ENCODE measurements at regions of chr6 and their contacts with region 1.

Region 1: DNA sequence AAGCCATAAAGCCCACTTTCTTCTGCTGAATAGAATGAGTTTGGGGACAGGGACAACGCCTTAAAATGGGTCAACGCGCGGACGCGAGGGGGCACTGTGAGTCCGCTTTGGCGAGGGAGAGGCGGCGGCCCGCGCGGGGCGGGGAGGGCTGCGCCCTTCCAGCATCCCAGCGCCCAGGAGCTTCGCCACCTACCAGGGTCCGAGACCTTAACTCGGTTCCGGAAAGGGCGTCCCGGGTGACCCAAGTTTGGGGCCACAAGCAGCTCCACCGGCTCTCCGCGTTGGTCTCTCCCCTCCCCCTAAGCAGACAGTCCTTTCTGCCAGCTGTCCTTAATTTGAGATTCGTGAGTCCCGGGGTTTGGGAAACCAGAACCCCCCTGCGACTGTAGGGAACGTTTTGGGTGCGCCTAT is 1.8 kb upstream of the SAMD5 start:
- DNase-seq: peak; percentile 70 to 84
- ATAC-seq: peak; percentile 66 to 87 (median 78)
- H3K4me3 ChIP-seq: peak overlapping the region; percentile 74
- H3K27ac ChIP-seq: no peak overlapping the region
- H3K4me1 ChIP-seq: peaks cover 9% of the 10 kb centered on the region
- H3K27me3 ChIP-seq: peaks cover 0 to 68% (median 10%) of the 10 kb centered on the region in 3 donors
- CTCF ChIP-seq: peak; percentile 86

Region 2: DNA sequence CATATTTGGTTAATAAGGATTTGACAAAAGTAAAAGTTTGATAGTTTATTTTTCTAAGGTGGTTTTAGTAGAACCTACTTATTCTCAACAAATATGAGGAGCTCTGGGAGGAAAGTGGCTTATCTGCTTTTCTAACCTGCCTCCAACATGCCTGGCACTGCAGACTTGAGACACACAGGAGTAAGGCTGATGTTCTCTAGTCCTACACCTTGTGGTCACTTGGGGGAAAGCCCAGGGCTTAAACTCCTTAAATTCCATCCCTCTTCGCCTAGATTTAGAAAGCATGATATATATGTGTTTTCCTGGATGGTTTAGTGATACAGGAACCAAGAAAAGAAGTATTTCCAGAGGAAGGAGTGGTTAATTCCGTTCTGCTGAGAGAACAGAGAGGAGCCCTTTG is 38.1 kb before region 1 on chr6:
- intact Hi-C with region 1: no loop called
- DNase-seq: no peak
- ATAC-seq: no peak
- H3K4me3 ChIP-seq: no peak overlapping the region
- H3K27ac ChIP-seq: no peak overlapping the region
- H3K4me1 ChIP-seq: no peaks in the 10 kb centered on the region
- H3K27me3 ChIP-seq: no peaks in the 10 kb centered on the region
- CTCF ChIP-seq: no peak

Region 3: GRCh38 chr6:147651249-147652063 is 144.7 kb after region 1 on chr6:
- intact Hi-C with region 1: loop called (anchors 1 to 10 kb)
- DNase-seq: no peak
- ATAC-seq: peak in 3 of 4 donors; percentile 58 to 61 (median 61)
- H3K4me3 ChIP-seq: no peak overlapping the region
- H3K27ac ChIP-seq: no peak overlapping the region
- H3K4me1 ChIP-seq: no peaks in the 10 kb centered on the region
- H3K27me3 ChIP-seq: no peaks in the 10 kb centered on the region
- CTCF ChIP-seq: peak; percentile 40

Region 4: DNA sequence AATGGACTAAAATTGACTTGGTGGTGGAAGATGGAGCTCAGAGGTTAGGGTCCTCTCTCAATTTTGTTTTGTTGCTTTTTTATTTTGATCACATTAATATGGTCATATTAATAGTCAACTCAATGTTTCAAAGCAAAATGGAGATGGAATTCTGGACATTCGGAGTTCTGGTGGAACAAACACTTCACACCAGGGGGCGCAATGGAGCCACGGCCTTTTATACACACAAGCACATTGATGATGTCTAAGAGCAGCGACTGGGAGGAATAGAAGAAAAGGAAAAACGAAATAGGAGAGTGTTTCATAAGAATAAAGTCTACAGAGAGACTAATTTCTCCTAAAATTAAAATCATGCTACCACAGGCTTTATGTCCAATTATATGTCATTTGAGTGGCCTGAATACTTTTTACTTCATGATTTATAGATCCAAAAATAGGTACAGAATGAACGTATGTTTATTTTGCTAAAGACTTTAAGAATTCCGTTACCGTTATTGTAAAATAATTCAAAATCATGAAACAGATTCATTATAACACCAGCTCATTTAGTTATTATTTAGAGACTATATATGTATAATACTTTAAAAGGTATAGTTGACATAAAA is 638.3 kb after region 1 on chr6:
- intact Hi-C with region 1: loop called in 1 of 2 experiments (anchors 5 kb)
- DNase-seq: peak; percentile 75 to 86
- ATAC-seq: peak in 3 of 4 donors; percentile 55 to 80 (median 56)
- H3K4me3 ChIP-seq: peak overlapping the region; percentile 25
- H3K27ac ChIP-seq: no peak overlapping the region
- H3K4me1 ChIP-seq: no peaks in the 10 kb centered on the region
- H3K27me3 ChIP-seq: peaks cover 0 to 3% (median 0%) of the 10 kb centered on the region in 3 donors
- CTCF ChIP-seq: peak; percentile 78

Region 5: GRCh38 chr6:148166339-148166968 is 659.7 kb after region 1 on chr6:
- intact Hi-C with region 1: loop called (anchors 2 to 5 kb)
- DNase-seq: no peak
- ATAC-seq: no peak
- H3K4me3 ChIP-seq: no peak overlapping the region
- H3K27ac ChIP-seq: no peak overlapping the region
- H3K4me1 ChIP-seq: no peaks in the 10 kb centered on the region
- H3K27me3 ChIP-seq: peaks cover 0 to 4% (median 0%) of the 10 kb centered on the region in 3 donors
- CTCF ChIP-seq: peak; percentile 70

Region 6: DNA sequence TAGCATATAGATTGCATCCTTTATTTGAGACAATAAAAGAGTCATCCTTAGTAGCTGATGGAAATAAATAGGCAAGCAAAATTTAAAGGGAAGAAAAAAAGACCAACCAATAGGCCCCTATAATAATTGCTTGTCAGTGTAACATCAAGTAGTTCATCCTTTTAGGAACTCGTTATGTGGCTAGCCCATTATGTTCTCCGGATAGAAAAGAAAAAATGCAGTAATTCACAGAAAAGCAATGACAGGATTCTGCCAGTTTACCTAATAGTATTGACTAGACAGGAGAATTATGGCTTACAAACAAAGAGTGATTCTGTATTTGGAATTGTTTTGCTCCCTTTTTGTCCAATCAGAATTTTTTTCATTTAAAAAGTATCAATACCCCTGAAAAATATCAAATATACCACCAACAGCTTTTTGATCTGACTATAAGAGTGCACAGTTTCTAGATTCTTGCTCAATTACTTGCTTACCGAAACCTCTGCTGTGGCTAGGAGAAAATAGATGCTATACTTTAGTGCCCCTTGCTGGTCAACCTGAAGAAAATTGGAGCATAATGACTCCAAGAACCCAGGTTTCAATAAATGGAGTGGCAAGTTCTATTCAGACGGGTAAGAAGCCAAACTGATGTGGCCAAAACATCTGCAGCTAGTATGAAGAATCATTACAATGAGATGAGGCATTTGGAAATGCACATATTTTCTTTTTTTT is 744.4 kb after region 1 on chr6:
- intact Hi-C with region 1: loop called (anchors 10 kb)
- DNase-seq: no peak
- ATAC-seq: peak in 3 of 4 donors; percentile 61 to 80 (median 64)
- H3K4me3 ChIP-seq: no peak overlapping the region
- H3K27ac ChIP-seq: no peak overlapping the region
- H3K4me1 ChIP-seq: peaks cover 3% of the 10 kb centered on the region
- H3K27me3 ChIP-seq: no peaks in the 10 kb centered on the region
- CTCF ChIP-seq: peak; percentile 51

Region 7: GRCh38 chr6:148464319-148465010 is 957.8 kb after region 1 on chr6:
- intact Hi-C with region 1: loop called (anchors 5 to 10 kb)
- DNase-seq: peak; percentile 56 to 65
- ATAC-seq: peak; percentile 57 to 84 (median 65)
- H3K4me3 ChIP-seq: no peak overlapping the region
- H3K27ac ChIP-seq: no peak overlapping the region
- H3K4me1 ChIP-seq: peaks cover 9% of the 10 kb centered on the region
- H3K27me3 ChIP-seq: no peaks in the 10 kb centered on the region
- CTCF ChIP-seq: peak; percentile 93